Prostate gland (tissue), 2 donors: ENCODE measurements at regions of chr11 and their contacts with region 1.

Region 1: DNA sequence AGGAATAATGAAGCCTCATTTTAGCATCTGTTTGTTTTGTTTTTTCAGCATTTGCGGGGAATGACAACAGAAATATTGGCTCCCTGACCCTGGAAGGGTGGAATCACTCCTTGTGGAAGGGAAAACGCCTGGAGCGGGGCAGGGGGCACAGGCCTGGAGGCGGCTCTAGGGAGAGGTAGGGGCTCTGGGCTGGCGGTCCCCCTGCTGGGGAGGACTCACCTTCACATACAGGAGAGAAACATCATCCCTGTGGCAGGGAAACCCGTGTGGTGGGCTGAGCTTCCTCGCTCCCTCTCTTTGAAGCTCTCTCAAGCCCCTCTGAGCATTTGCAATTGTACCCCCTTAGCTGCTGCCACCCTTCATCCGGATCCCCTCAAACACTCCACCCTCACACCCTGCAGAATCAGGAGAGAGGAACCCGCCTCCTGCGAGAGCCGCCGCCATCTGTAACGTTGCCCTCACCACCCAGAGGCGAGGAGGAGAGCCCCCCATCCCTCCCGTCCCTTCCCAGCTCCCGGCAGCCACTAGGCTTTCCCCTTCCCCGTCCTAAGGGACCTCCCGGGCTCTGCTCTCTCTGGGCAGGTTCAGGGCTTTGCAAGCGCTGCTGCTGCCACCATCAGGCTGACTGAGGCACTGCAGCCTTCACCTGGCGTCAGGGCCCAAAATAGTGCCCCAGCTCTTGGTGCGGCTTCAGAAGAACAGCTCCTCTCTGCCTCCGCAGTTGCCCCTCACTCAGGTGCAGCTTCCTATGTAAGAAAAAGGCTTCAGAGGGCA is 10.4 kb downstream of the KIRREL3 start:
- DNase-seq: peak; percentile 51
- H3K4me3 ChIP-seq: no peak overlapping the region
- H3K27ac ChIP-seq: no peak overlapping the region
- H3K4me1 ChIP-seq: no peaks in the 10 kb centered on the region
- H3K27me3 ChIP-seq: no peaks in the 10 kb centered on the region
- CTCF ChIP-seq: peak; percentile 75 to 82 (median 79)
- POLR2A ChIP-seq: no peak

Region 2: DNA sequence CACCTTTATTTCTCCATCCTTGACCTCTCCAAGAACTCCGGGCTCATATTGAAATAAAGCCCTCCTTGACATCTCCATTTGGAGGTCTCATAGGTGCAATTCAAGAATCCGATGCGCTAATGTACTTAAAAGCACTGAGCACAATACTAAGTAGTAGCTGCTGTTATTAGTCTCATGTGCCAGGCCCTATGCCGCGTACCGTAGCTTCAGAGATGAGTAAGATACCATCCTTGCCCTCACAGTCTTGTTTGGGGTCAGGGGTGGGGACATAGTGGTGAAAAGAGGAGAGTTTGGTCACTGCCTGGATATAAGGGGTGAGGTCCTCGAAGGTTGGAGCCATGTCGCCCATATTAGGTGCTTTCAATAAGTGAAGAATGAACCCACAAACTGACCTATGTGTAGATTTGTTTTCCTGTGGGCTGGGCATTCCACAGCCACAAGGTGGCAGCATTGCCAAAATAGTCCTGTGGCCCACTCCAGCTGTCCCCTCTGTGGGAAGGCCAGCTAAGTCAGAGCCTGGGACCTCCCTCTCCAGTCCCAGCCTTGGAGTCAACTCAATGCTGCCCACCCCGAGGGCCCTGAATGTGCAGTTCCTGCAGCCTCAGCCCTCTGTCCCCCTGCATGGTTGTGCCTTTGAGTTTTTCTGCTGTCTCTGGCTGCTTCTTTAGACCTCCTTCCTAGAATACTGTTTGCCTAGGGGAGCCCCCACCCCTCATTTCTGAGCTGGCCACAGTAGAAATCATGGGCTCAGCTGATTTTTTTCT is 679.7 kb before region 1 on chr11:
- intact Hi-C with region 1: loop called (anchors 10 kb)
- DNase-seq: peak; percentile 72
- H3K4me3 ChIP-seq: no peak overlapping the region
- H3K27ac ChIP-seq: no peak overlapping the region
- H3K4me1 ChIP-seq: no peaks in the 10 kb centered on the region
- H3K27me3 ChIP-seq: no peaks in the 10 kb centered on the region
- CTCF ChIP-seq: peak; percentile 75 to 91 (median 86)
- POLR2A ChIP-seq: no peak

Region 3: GRCh38 chr11:126440792-126441514 is 549.2 kb before region 1 on chr11:
- intact Hi-C with region 1: loop called (anchors 5 kb)
- DNase-seq: peak; percentile 59
- H3K4me3 ChIP-seq: no peak overlapping the region
- H3K27ac ChIP-seq: no peak overlapping the region
- H3K4me1 ChIP-seq: no peaks in the 10 kb centered on the region
- H3K27me3 ChIP-seq: no peaks in the 10 kb centered on the region
- CTCF ChIP-seq: peak; percentile 83 to 96 (median 92)
- POLR2A ChIP-seq: no peak

Region 4: DNA sequence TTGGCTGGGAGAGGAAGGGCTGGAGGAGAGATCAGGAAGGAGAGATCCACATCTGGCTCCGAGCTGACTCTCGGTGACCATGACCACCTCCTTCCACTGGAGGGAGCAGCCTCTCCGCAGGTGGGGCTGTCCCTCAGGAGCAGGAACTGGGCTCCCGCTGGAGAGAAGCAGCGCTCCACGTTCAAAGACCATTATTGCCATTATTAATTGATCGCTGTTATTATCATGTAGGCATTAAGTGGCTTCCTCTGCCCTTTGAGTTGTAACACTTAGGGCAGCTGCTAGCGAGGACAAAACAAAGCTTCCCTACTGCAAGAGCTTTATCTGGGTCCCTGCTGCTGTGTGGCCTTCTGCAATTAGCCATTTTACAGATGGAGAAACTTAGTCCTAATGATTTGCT is 382.8 kb before region 1 on chr11:
- intact Hi-C with region 1: loop called (anchors 10 kb)
- DNase-seq: peak; percentile 25
- H3K4me3 ChIP-seq: no peak overlapping the region
- H3K27ac ChIP-seq: no peak overlapping the region
- H3K4me1 ChIP-seq: no peaks in the 10 kb centered on the region
- H3K27me3 ChIP-seq: no peaks in the 10 kb centered on the region
- CTCF ChIP-seq: peak in 3 of 4 experiments; percentile 44 to 58 (median 57)
- POLR2A ChIP-seq: no peak

Region 5: GRCh38 chr11:126700773-126701519 is 289.2 kb before region 1 on chr11:
- intact Hi-C with region 1: no loop called
- DNase-seq: no peak
- H3K4me3 ChIP-seq: no peak overlapping the region
- H3K27ac ChIP-seq: no peak overlapping the region
- H3K4me1 ChIP-seq: no peaks in the 10 kb centered on the region
- H3K27me3 ChIP-seq: no peaks in the 10 kb centered on the region
- CTCF ChIP-seq: no peak
- POLR2A ChIP-seq: no peak

Region 6: DNA sequence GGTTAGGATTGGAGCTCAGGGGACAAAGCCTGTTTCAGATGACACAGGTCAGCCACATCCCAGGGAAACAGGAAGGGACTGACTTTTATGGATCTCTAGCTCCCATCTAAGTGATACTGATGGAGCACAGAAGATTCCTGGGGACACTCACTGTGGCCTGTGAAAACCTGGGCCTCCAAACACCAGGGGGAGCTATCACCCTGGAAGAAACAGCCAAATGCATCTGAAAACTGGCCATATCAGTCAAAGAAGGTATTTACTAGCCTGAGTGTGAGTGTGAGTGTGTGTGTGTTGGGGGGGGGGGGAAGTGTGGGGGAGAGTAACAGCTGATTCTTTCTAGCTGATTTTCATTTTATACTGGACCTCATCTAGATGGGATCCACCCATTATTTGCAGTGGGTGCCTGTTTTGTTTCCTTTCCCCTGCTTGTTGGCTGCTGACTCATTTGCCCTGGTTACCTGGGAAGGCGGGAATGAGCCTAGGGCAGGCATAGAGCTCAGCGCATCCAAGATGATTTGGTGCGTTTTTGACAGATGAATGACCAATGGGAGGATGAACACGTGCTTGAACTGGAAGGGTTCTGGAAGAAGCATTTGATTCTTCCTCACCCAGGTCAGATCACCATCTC is 273.6 kb before region 1 on chr11:
- intact Hi-C with region 1: loop called (anchors 2 kb)
- DNase-seq: peak; percentile 23
- H3K4me3 ChIP-seq: no peak overlapping the region
- H3K27ac ChIP-seq: no peak overlapping the region
- H3K4me1 ChIP-seq: no peaks in the 10 kb centered on the region
- H3K27me3 ChIP-seq: no peaks in the 10 kb centered on the region
- CTCF ChIP-seq: peak in 3 of 4 experiments; percentile 40 to 56 (median 54)
- POLR2A ChIP-seq: no peak

Region 7: GRCh38 chr11:126898802-126899201 is 91.3 kb before region 1 on chr11:
- intact Hi-C with region 1: no loop called
- DNase-seq: no peak
- H3K4me3 ChIP-seq: no peak overlapping the region
- H3K27ac ChIP-seq: no peak overlapping the region
- H3K4me1 ChIP-seq: no peaks in the 10 kb centered on the region
- H3K27me3 ChIP-seq: no peaks in the 10 kb centered on the region
- CTCF ChIP-seq: no peak
- POLR2A ChIP-seq: no peak